AG04449 (cell line): ENCODE measurements at regions of chr9 and their contacts with region 1.

Region 1: GRCh38 chr9:127838375-127839078 is 15.9 kb downstream of the ENG start:
- DNase-seq: peak; percentile 40
- H3K4me3 ChIP-seq: peak overlapping the region; percentile 21
- CTCF ChIP-seq: no peak

Region 2: GRCh38 chr9:127809512-127810377 is 28.8 kb before region 1 on chr9:
- CTCF ChIA-PET with region 1: no interaction called
- POLR2A ChIA-PET with region 1: no interaction called
- DNase-seq: no peak
- H3K4me3 ChIP-seq: no peak overlapping the region
- CTCF ChIP-seq: no peak

Region 3: DNA sequence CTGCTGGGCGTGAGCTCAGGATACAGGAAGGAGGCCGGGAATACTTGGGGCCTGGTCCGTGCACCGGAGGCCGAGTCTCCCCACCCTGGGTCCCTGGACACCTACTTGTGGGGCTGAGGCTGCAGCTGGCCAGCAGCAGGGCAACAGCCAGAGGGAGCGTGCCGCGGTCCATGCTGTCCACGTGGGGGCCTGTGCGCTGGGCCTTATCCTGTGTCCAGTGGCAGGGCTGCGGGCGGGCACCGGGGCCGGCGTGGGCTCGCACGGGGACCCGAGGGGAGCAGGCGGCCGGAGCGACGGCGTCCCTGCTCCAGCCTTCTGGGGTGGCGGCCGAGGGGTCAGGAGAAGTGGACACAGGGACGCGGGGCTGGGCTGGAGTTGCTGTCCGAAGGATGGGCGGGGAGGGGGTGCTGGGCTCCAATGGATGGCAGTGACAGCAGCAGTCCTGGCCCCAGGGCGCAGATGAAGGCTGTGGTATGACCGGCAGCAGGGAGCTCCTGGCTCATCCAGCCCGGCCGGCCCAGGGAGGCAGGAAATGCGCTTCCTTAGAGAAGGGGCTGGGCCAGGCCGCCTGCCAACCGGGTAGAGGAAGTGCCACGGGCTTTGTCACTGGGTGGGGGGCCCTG is 15.8 kb after region 1 on chr9 and contains the start of gene ENG:
- CTCF ChIA-PET with region 1: interaction called, 3 read pairs
- POLR2A ChIA-PET with region 1: interaction called, 12 read pairs
- DNase-seq: no peak
- H3K4me3 ChIP-seq: peak within 1 kb of the TSS; percentile 68
- CTCF ChIP-seq: peak; percentile 48

Region 4: DNA sequence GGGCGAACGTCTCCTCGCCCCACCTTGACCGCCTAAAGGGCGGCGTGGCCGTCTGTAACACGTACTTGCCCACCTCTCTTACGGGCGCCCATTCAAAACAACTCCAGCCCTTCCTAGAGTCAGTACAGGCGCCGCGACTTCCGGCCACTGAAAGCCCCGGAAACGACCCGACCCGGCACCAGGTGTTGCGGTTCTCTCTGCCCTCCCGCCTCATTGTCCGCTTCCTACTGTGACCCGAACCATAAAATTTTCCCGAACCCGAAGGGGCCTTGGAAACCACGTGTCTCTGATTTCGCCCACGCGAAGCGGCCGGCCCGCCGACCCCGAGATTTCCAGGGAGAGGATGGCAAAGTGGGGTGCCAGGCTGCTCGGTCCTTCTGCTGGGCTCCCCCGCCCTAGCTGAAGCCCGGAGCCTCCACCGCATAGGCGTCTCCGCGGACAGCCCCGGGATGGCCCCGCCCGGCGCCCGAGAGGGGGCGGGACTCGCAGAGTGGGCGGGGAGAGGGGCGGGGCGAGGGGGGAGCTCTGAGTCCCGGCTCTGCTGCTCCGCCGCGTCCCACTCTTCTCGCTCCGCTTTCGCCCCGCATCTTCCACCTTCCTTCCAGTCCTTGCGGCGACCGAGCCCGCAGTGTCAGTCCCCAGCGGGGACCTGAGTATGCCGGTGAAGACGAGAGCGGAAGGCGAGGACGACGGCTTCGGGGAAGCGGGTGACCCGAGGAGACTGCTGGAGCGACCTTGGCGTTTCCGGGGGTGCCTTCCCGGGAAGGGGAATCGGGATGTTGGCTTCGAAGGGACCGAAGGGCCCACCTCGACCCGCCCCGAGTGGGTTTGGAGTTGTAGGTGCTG is 289.7 kb after region 1 on chr9:
- CTCF ChIA-PET with region 1: no interaction called
- POLR2A ChIA-PET with region 1: no interaction called
- DNase-seq: peak; percentile 42
- H3K4me3 ChIP-seq: peak overlapping the region; percentile 95
- CTCF ChIP-seq: no peak